Mammary epithelial cell (primary cell): ENCODE measurements at regions of chr9 and their contacts with region 1.

Region 1: GRCh38 chr9:124617471-124618141 is 110.4 kb upstream of the NR5A1 start:
- DNase-seq: peak; percentile 57
- H3K4me3 ChIP-seq: no peak overlapping the region
- H3K27ac ChIP-seq: no peak overlapping the region
- H3K4me1 ChIP-seq: peaks cover 9% of the 10 kb centered on the region
- H3K27me3 ChIP-seq: no peaks in the 10 kb centered on the region
- CTCF ChIP-seq: peak; percentile 94 to 96

Region 2: DNA sequence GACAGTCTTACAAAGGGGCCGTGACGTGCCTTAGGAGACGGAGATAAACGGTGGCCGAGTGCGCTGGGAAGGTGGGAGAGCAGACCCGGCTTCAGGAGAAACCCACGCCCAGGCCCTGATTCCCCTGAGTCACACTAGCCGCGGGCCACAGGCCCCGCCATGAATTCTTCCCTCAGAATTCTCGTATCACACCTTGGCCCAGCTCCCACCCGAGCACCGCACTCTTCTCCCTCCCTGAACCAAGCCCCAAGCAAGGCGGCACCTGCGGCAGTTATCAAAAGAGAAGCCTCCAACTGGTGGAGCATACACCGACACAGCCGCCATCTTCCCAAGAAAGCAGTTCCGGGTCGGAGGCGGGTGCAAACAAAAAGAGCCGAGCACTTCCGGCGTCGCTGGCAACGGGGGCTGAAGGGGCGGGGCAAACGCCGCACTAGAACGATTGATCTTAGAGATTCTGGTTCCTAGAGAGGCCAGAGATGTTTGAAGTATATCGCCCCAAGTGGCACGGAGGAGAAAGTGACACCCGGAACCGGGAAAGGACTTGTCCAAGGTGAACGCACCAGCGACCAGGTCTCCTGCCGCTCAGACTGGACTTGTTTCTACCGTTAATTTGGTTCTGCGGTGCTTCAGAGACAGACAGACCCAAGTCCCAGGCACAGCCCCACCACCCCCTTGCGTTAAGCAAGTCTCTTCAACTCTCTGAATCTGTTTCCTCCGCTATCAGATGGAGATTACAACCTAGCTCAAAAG is 202.3 kb before region 1 on chr9 and contains the start of gene PSMB7:
- CTCF ChIA-PET with region 1: no interaction called
- dilution Hi-C with region 1: no loop called
- in situ Hi-C with region 1: no loop called
- intact Hi-C with region 1: loop called (anchors 5 kb)
- DNase-seq: peak; percentile 90
- H3K4me3 ChIP-seq: peak within 1 kb of the TSS; percentile 60 to 82 (median 77)
- H3K27ac ChIP-seq: peak within 1 kb of the TSS; percentile 77
- H3K4me1 ChIP-seq: peaks cover 38% of the 10 kb centered on the region
- H3K27me3 ChIP-seq: no peaks in the 10 kb centered on the region
- CTCF ChIP-seq: peak; percentile 68 to 84
- total RNA-seq, gene PSMB7: 124 to 213 TPM

Region 3: GRCh38 chr9:124658165-124659017 is 40.8 kb after region 1 on chr9:
- CTCF ChIA-PET with region 1: interaction called, 6 read pairs
- dilution Hi-C with region 1: no loop called
- in situ Hi-C with region 1: no loop called
- intact Hi-C with region 1: loop called (anchors 1 kb)
- DNase-seq: peak; percentile 94
- H3K4me3 ChIP-seq: peak overlapping the region; percentile 49 to 95 (median 73)
- H3K27ac ChIP-seq: peak overlapping the region; percentile 95
- H3K4me1 ChIP-seq: peaks cover 17% of the 10 kb centered on the region
- H3K27me3 ChIP-seq: no peaks in the 10 kb centered on the region
- CTCF ChIP-seq: no peak

Region 4: DNA sequence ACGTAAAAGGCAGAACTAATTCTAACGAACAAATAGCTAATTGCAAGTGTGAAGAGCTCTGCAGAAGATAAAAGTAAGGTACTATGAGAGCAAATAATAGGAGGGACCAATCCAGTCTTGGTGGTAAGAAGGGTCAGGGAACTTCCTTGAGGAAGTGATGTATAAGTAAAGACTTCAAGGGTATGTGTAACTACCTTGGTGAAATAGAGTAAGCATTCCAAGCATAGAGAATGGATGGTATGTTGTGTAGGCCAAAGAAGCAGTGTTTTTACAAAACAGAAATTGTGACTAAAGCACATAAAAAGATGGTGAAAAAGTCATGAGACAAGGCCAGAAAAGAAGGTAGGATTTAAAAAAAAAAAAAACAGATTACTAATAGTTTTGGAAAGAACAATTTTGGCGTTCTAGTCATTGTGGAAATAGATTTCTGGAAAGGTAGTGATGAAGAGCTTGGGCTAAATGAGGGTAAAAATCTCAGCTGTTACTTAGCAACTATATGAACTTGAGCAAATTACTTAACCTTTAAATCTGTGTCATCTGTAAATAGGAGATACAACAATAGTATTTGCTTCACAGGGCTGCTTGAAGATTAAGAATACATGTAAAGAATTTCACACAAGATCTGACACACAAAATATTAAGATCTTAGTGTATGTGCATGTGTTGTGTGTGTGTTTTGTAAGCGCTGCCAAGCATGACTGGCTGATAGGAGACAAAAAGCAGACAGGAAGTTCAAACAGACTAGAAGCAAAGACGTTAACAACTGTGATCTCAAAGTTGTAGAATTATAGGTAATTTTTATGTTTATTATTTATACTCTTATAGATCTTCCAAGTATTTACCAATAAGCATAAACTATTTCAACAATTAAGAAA is 80.0 kb after region 1 on chr9:
- CTCF ChIA-PET with region 1: interaction called, 12 read pairs
- dilution Hi-C with region 1: no loop called
- in situ Hi-C with region 1: no loop called
- intact Hi-C with region 1: no loop called
- DNase-seq: peak; percentile 40
- H3K4me3 ChIP-seq: peak overlapping the region in 2 of 3 experiments; percentile 40 to 57
- H3K27ac ChIP-seq: peak overlapping the region; percentile 89
- H3K4me1 ChIP-seq: peaks cover 33% of the 10 kb centered on the region
- H3K27me3 ChIP-seq: no peaks in the 10 kb centered on the region
- CTCF ChIP-seq: no peak

Region 5: DNA sequence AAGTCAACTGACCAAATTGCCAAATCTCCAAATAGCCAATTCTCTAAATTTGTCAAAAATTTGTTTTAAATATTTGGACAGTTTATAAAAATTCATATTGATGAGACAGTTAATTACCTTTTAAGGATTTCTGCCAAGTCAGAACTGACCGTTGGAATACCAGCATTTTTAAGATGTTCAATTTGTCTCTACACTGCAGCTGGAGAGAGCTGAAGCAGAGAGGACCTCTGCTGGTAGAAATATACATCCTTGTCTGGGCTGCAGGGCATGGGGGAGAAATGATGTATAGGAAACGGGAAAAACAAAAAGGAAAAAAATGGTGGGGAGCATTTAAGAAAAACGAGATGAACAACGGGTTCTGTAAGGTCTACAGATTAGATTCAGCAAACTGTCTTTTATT is 136.7 kb after region 1 on chr9:
- CTCF ChIA-PET with region 1: no interaction called
- dilution Hi-C with region 1: no loop called
- in situ Hi-C with region 1: no loop called
- intact Hi-C with region 1: loop called (anchors 1 kb)
- DNase-seq: no peak
- H3K4me3 ChIP-seq: no peak overlapping the region
- H3K27ac ChIP-seq: no peak overlapping the region
- H3K4me1 ChIP-seq: peaks cover 14% of the 10 kb centered on the region
- H3K27me3 ChIP-seq: no peaks in the 10 kb centered on the region
- CTCF ChIP-seq: peak; percentile 36 to 65